Endothelial cell of umbilical vein (primary cell): ENCODE measurements at regions of chr1 and their contacts with region 1.

Region 1: GRCh38 chr1:241519308-241520079 is at the start of gene FH:
- DNase-seq: peak; percentile 98
- H3K4me3 ChIP-seq: peak within 1 kb of the TSS; percentile 89 to 93 (median 93)
- H3K27ac ChIP-seq: peak within 1 kb of the TSS; percentile 37
- H3K4me1 ChIP-seq: peaks cover 13% of the 10 kb centered on the region
- H3K27me3 ChIP-seq: peaks cover 14 to 38% of the 10 kb centered on the region in 2 experiments
- CTCF ChIP-seq: no peak
- POLR2A ChIP-seq: peak; percentile 94
- total RNA-seq, gene FH: 96.6 and 105 TPM in 2 replicates

Region 2: DNA sequence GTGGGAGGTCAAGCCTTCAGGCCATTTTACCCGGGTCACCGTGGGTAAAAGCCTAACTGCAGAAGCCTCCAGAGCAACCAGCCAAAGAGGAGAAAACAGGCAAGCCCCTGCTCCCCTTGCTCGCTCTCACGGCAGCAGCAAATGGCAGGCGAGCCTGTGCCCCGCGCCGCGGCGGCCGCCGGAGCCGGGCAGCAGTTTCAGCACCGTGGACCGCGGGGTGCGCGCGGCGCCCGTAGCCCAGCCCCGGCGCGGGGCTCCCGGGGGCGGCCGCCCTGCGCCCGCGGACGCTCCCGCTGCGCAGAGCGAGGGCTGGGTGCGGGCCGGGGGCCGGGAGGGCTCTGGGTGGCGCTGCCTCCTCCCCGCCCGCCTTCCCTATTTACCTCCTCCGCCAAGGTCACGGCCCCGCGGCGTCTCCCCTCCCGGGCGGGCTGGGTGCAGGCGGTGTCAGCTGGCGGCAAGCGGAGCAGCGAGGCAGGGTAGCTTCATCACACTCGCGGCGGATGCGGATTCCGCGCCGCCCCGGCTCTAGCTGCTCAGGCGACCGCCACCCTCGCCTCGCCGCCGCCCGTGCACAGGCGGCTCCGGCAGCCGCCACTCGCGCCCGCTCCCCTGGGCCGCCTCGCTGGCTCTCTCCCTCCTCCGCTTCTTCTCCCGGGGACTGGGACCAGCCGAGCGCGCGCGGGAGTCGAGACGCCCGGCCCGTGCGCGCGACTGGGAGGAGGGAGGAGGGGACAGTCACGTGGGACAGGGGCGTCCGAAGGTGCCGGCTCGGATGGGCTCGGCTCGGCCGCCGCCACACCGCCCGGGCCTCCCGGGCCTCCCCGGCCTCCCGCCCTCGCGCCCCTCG is 162.8 kb before region 1 on chr1 and contains the start of gene RGS7:
- CTCF ChIA-PET with region 1: no interaction called
- POLR2A ChIA-PET with region 1: no interaction called
- dilution Hi-C with region 1: no loop called
- intact Hi-C with region 1: loop called (anchors 5 kb)
- DNase-seq: peak; percentile 60
- H3K4me3 ChIP-seq: peak within 1 kb of the TSS; percentile 43 to 71 (median 45)
- H3K27ac ChIP-seq: no peak within 1 kb of the TSS
- H3K4me1 ChIP-seq: peaks cover 3% of the 10 kb centered on the region
- H3K27me3 ChIP-seq: no peaks in the 10 kb centered on the region
- CTCF ChIP-seq: no peak
- POLR2A ChIP-seq: no peak
- total RNA-seq, gene RGS7: 0.44 and 1.2 TPM in 2 replicates

Region 3: DNA sequence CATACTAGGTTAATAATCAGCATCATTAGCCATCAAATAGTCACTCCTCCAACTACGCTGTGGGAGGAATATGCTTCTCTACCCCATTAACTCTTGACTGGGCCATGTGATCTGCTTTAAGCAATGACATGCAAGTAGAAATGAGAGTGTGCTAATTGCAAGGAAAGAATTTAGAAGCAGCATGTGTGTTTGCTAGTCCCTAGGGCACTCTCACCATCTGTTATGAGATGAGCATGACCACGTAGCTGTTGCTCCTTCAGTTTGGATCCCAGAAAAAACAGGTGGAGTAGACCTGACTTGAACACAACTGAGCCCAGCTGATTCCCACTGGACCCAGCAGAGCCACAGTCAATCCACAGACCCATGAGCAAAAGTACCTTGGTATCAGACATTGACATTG is 142.8 kb before region 1 on chr1:
- CTCF ChIA-PET with region 1: no interaction called
- POLR2A ChIA-PET with region 1: no interaction called
- dilution Hi-C with region 1: no loop called
- intact Hi-C with region 1: no loop called
- DNase-seq: no peak
- H3K4me3 ChIP-seq: no peak overlapping the region
- H3K27ac ChIP-seq: no peak overlapping the region
- H3K4me1 ChIP-seq: no peaks in the 10 kb centered on the region
- H3K27me3 ChIP-seq: no peaks in the 10 kb centered on the region
- CTCF ChIP-seq: no peak
- POLR2A ChIP-seq: no peak

Region 4: DNA sequence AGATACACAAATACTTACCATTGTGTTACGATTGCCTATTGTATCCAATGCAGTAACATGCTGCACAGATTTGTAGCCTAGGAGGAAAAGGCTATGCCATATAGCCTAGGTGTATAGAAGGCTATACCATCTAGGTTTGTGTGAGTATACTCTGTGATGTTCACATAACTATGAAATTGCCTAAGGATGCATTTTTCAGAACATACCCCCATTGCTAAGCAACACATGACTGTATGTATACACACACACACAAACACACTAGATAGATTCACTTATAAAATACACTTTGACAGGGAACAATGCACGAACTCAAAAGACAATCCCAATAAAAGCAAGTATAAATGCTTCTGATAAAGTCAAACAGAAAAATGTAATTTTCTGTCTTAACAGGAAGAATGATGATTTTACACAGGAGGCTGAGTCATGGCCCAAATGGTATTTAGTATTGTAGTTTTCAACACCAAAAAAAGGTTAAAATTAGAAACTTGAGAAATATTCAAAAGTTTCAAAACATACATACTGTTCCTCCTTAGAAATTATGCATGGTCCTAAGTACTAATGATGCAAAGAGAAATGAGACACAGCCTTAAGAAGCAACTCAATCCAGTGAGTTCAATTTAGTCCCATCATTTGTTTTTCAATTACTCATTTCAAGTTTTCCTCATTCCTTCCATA is 12.2 kb before region 1 on chr1:
- CTCF ChIA-PET with region 1: interaction called, 4 read pairs
- POLR2A ChIA-PET with region 1: interaction called, 3 read pairs
- dilution Hi-C with region 1: no loop called
- intact Hi-C with region 1: loop called (anchors 1 kb)
- DNase-seq: peak; percentile 36
- H3K4me3 ChIP-seq: no peak overlapping the region
- H3K27ac ChIP-seq: peak overlapping the region; percentile 45
- H3K4me1 ChIP-seq: peaks cover 26% of the 10 kb centered on the region
- H3K27me3 ChIP-seq: no peaks in the 10 kb centered on the region
- CTCF ChIP-seq: no peak
- POLR2A ChIP-seq: no peak

Region 5: DNA sequence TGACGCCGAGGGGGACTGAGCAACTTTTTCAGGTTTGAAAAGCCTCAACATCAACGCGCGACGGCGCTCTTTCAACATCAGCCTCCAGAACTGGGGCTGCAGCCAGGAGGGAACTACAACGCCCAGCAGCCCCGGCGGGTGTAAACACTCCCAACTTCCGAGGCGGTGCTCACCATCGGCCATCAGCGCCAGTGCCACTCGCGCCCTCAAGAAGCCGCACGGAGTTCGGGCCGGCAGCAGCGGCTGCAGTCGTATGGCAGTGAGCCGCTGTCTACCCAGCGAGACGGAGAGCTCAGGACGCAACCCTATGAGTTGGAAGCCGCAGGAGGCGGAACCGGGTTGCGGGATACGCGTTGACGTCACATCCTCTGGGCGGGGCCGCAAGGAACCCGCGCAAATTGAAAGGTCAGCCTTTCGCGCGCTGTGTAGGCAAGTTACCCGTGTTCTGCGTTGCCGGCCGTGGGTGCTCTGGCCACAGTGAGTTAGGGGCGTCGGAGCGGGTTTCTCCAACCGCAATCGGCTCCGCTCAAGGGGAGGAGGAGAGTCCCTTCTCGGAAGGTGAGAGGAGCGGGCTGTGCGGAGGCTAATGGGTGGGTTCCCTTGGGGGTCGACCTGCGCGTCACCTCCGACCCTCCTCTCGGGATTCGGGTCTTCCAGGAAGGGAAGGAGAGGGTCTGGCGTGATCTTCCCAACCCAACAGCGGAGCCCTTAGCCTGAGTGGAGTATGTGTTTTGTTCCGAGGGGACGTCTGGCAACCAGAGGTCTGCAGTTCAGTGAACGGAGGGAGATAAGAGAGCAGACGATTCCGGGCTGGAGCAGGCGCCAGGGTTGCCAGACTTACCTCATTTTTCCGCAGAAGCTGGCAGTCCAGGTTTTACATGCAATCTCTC is 328.5 kb after region 1 on chr1 and contains the start of gene EXO1:
- CTCF ChIA-PET with region 1: interaction called, 3 read pairs
- POLR2A ChIA-PET with region 1: no interaction called
- dilution Hi-C with region 1: no loop called
- intact Hi-C with region 1: loop called (anchors 5 kb)
- DNase-seq: peak; percentile 94
- H3K4me3 ChIP-seq: peak within 1 kb of the TSS; percentile 33 to 69 (median 61)
- H3K27ac ChIP-seq: peak within 1 kb of the TSS; percentile 85
- H3K4me1 ChIP-seq: peaks cover 12% of the 10 kb centered on the region
- H3K27me3 ChIP-seq: peaks cover 3 to 7% of the 10 kb centered on the region in 2 experiments
- CTCF ChIP-seq: peak; percentile 32 to 37
- POLR2A ChIP-seq: peak; percentile 58
- total RNA-seq, gene EXO1: 19.8 and 23.5 TPM in 2 replicates